A673 (cell line): ENCODE measurements at regions of chr22 and their contacts with region 1.

Region 1: DNA sequence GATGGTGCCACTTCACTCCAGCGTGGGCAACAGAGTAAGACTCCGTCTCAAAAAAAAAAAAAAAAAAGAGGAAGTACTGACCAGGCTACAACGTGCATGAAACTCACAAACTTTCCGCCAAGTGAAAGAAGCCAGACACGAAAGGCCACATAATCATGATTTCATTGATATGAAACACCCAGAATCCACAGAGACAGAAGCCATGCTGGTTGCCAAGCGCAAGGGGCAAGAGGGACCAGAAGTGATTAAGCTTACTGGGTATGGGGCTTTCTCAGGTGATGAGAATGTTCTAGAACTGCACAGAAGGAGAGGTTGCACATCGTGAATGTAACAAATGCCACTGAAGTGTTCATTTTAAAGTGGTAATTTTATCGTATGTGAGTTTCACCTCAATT is 60.9 kb downstream of the CELSR1 start:
- DNase-seq: no peak
- H3K4me3 ChIP-seq: no peak overlapping the region
- H3K27ac ChIP-seq: no peak overlapping the region
- H3K4me1 ChIP-seq: no peaks in the 10 kb centered on the region
- H3K27me3 ChIP-seq: no peaks in the 10 kb centered on the region
- CTCF ChIP-seq: no peak

Region 2: GRCh38 chr22:46457524-46458488 is 18.7 kb before region 1 on chr22:
- CTCF ChIA-PET with region 1: no interaction called
- POLR2A ChIA-PET with region 1: no interaction called
- intact Hi-C with region 1: no loop called
- DNase-seq: no peak
- H3K4me3 ChIP-seq: no peak overlapping the region
- H3K27ac ChIP-seq: no peak overlapping the region
- H3K4me1 ChIP-seq: peaks cover 10% of the 10 kb centered on the region
- H3K27me3 ChIP-seq: no peaks in the 10 kb centered on the region
- CTCF ChIP-seq: no peak

Region 3: GRCh38 chr22:47107431-47107830 is 630.9 kb after region 1 on chr22:
- CTCF ChIA-PET with region 1: no interaction called
- POLR2A ChIA-PET with region 1: no interaction called
- intact Hi-C with region 1: loop called (anchors 10 kb)
- DNase-seq: no peak
- H3K4me3 ChIP-seq: no peak overlapping the region
- H3K27ac ChIP-seq: no peak overlapping the region
- H3K4me1 ChIP-seq: no peaks in the 10 kb centered on the region
- H3K27me3 ChIP-seq: no peaks in the 10 kb centered on the region
- CTCF ChIP-seq: no peak

Region 4: GRCh38 chr22:47395481-47395880 is 918.9 kb after region 1 on chr22:
- CTCF ChIA-PET with region 1: no interaction called
- POLR2A ChIA-PET with region 1: interaction called, 10 read pairs
- intact Hi-C with region 1: no loop called
- DNase-seq: no peak
- H3K4me3 ChIP-seq: no peak overlapping the region
- H3K27ac ChIP-seq: no peak overlapping the region
- H3K4me1 ChIP-seq: no peaks in the 10 kb centered on the region
- H3K27me3 ChIP-seq: no peaks in the 10 kb centered on the region
- CTCF ChIP-seq: no peak